ENCODE measurements at regions of chr4 and their contacts with region 1.

Region 1: DNA sequence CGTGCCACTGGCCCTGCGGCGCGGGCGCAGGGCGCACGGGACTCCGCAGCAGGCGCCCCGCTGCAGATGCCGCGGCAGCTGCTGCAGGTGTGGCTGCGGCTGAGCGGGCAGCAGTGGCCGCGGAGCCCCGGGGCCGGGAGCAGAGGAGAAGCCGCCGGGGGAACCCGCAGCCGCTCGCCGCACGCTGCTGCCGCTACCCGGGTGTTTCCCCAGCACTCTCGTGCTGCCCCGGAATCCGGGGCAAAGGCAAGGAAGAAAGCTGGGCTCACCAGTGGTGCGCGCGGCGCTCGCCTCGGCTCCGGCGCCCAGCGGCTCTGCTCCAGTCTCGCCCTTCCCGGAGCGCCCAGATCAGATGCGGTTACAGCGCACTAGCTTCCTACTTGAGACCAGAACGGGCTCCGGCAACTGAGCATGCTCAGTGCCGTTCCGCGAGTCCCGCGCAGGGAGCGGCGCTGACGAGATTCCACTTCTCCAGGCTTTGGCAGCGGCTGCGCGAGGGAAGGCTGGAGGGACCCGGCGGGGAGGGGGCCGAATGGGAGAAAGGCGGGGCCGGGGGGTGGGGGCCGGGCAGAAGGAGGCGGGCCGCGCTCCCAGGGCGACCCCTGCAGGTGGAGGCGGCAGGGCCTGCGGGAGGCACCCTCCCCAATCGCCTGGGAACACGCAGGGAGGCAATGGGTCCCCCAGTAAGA is at the start of gene APBB2:
- DNase-seq: peak; percentile 96
- H3K4me3 ChIP-seq: peak within 1 kb of the TSS; percentile 91
- H3K4me3 Mint-ChIP-seq: peak within 1 kb of the TSS; percentile 99
- H3K27ac Mint-ChIP-seq: peak within 1 kb of the TSS; percentile 93
- H3K4me1 ChIP-seq: peaks cover 27% of the 10 kb centered on the region
- H3K4me1 Mint-ChIP-seq: peaks cover 9% of the 10 kb centered on the region
- H3K27me3 ChIP-seq: no peaks in the 10 kb centered on the region
- H3K27me3 Mint-ChIP-seq: no peaks in the 10 kb centered on the region
- CTCF ChIP-seq: peak; percentile 82 to 94
- total RNA-seq, gene APBB2: 80.7 and 88.6 TPM in 2 replicates

Region 2: GRCh38 chr4:40749717-40750460 is 464.4 kb before region 1 on chr4 and contains the start of gene NSUN7:
- CTCF ChIA-PET with region 1: no interaction called
- POLR2A ChIA-PET with region 1: no interaction called
- intact Hi-C with region 1: loop called (anchors 10 kb)
- DNase-seq: peak; percentile 94 to 96
- H3K4me3 ChIP-seq: peak within 1 kb of the TSS; percentile 94
- H3K4me3 Mint-ChIP-seq: peak within 1 kb of the TSS; percentile 94
- H3K27ac Mint-ChIP-seq: peak within 1 kb of the TSS; percentile 93
- H3K4me1 ChIP-seq: peaks cover 6% of the 10 kb centered on the region; the same call in 1 of the 2 replicates
- H3K4me1 Mint-ChIP-seq: no peaks in the 10 kb centered on the region
- H3K27me3 ChIP-seq: no peaks in the 10 kb centered on the region
- H3K27me3 Mint-ChIP-seq: no peaks in the 10 kb centered on the region
- CTCF ChIP-seq: no peak
- total RNA-seq, gene NSUN7: 18.5 and 19.6 TPM in 2 replicates

Region 3: DNA sequence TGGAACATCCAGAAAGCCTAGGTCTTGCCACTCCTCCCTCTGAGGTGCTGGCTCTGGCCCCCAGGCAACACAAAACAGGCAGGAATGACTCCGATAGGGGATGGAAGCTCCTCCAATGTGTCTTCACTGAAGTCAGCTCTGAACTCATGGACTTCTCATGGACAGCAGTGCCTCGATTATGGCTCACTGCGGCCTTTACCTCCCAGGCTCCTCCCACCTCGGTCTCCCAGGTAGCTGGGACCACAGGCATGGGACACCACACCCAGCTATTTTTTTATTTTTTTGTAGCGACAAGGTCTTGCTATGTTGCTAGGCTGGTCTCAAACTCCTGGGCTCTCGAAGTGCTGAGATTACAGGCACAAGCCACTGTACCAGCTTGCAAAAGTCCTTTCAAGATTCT is 283.1 kb before region 1 on chr4:
- CTCF ChIA-PET with region 1: interaction called, 11 read pairs
- POLR2A ChIA-PET with region 1: interaction called, 5 read pairs
- intact Hi-C with region 1: loop called (anchors 1 kb)
- DNase-seq: peak in 1 of 2 experiments; percentile 56
- H3K4me3 ChIP-seq: no peak overlapping the region
- H3K4me3 Mint-ChIP-seq: no peak overlapping the region
- H3K27ac Mint-ChIP-seq: peak overlapping the region; percentile 7
- H3K4me1 ChIP-seq: peaks cover 8% of the 10 kb centered on the region
- H3K4me1 Mint-ChIP-seq: peaks cover 12% of the 10 kb centered on the region
- H3K27me3 ChIP-seq: no peaks in the 10 kb centered on the region
- H3K27me3 Mint-ChIP-seq: no peaks in the 10 kb centered on the region
- CTCF ChIP-seq: no peak

Region 4: GRCh38 chr4:41009411-41009810 is 204.9 kb before region 1 on chr4:
- CTCF ChIA-PET with region 1: no interaction called
- POLR2A ChIA-PET with region 1: no interaction called
- intact Hi-C with region 1: no loop called
- DNase-seq: no peak
- H3K4me3 ChIP-seq: no peak overlapping the region
- H3K4me3 Mint-ChIP-seq: no peak overlapping the region
- H3K27ac Mint-ChIP-seq: no peak overlapping the region
- H3K4me1 ChIP-seq: no peaks in the 10 kb centered on the region
- H3K4me1 Mint-ChIP-seq: peaks cover 7% of the 10 kb centered on the region
- H3K27me3 ChIP-seq: no peaks in the 10 kb centered on the region
- H3K27me3 Mint-ChIP-seq: no peaks in the 10 kb centered on the region
- CTCF ChIP-seq: no peak

Region 5: GRCh38 chr4:41079871-41080560 is 134.3 kb before region 1 on chr4:
- CTCF ChIA-PET with region 1: interaction called, 3 read pairs
- POLR2A ChIA-PET with region 1: no interaction called
- intact Hi-C with region 1: loop called (anchors 5 kb)
- DNase-seq: no peak
- H3K4me3 ChIP-seq: no peak overlapping the region
- H3K4me3 Mint-ChIP-seq: no peak overlapping the region
- H3K27ac Mint-ChIP-seq: no peak overlapping the region
- H3K4me1 ChIP-seq: peaks cover 40% of the 10 kb centered on the region
- H3K4me1 Mint-ChIP-seq: peaks cover 38% of the 10 kb centered on the region
- H3K27me3 ChIP-seq: no peaks in the 10 kb centered on the region
- H3K27me3 Mint-ChIP-seq: no peaks in the 10 kb centered on the region
- CTCF ChIP-seq: no peak

Region 6: GRCh38 chr4:41133454-41134018 is 80.7 kb before region 1 on chr4:
- CTCF ChIA-PET with region 1: interaction called, 16 read pairs
- POLR2A ChIA-PET with region 1: no interaction called
- intact Hi-C with region 1: loop called (anchors 1 kb)
- DNase-seq: peak; percentile 77 to 89
- H3K4me3 ChIP-seq: no peak overlapping the region
- H3K4me3 Mint-ChIP-seq: peak overlapping the region; percentile 23
- H3K27ac Mint-ChIP-seq: peak overlapping the region; percentile 71
- H3K4me1 ChIP-seq: peaks cover 86% of the 10 kb centered on the region
- H3K4me1 Mint-ChIP-seq: peaks cover 48% of the 10 kb centered on the region
- H3K27me3 ChIP-seq: no peaks in the 10 kb centered on the region
- H3K27me3 Mint-ChIP-seq: no peaks in the 10 kb centered on the region
- CTCF ChIP-seq: no peak

Region 7: DNA sequence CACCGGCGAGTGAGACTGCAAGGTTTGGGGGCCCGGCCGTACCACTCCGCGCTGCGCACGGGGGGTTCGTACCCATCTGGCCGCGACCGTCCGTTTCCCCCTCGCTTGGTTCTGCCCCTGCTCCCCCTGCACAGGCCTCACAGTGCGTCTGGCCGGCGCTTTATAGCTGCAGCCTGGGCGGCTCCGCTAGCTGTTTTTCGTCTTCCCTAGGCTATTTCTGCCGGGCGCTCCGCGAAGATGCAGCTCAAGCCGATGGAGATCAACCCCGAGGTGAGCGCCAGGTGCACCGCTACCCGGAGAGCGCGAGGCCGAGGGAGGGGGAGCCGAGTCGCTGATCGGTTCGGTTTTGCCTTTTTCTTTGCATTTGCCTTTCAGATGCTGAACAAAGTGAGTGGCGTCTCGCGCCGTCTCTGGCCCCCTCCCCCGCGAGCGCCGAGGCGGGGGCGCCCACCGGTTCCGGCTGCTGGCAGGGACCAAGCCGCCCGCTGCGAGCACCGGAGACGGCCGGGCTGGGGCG is 42.5 kb after region 1 on chr4 and contains the start of gene UCHL1:
- CTCF ChIA-PET with region 1: interaction called, 5 read pairs
- POLR2A ChIA-PET with region 1: interaction called, 9 read pairs
- intact Hi-C with region 1: loop called (anchors 1 kb)
- DNase-seq: peak; percentile 86 to 90
- H3K4me3 ChIP-seq: peak within 1 kb of the TSS; percentile 63
- H3K4me3 Mint-ChIP-seq: peak within 1 kb of the TSS; percentile 69
- H3K27ac Mint-ChIP-seq: peak within 1 kb of the TSS; percentile 82
- H3K4me1 ChIP-seq: peaks cover 13% of the 10 kb centered on the region
- H3K4me1 Mint-ChIP-seq: peaks cover 17% of the 10 kb centered on the region
- H3K27me3 ChIP-seq: no peaks in the 10 kb centered on the region
- H3K27me3 Mint-ChIP-seq: peaks cover 11% of the 10 kb centered on the region
- CTCF ChIP-seq: no peak
- total RNA-seq, gene UCHL1: 198 and 233 TPM in 2 replicates

Region 8: GRCh38 chr4:41304221-41304620 is 89.9 kb after region 1 on chr4:
- CTCF ChIA-PET with region 1: no interaction called
- POLR2A ChIA-PET with region 1: no interaction called
- intact Hi-C with region 1: no loop called
- DNase-seq: no peak
- H3K4me3 ChIP-seq: no peak overlapping the region
- H3K4me3 Mint-ChIP-seq: no peak overlapping the region
- H3K27ac Mint-ChIP-seq: no peak overlapping the region
- H3K4me1 ChIP-seq: no peaks in the 10 kb centered on the region
- H3K4me1 Mint-ChIP-seq: no peaks in the 10 kb centered on the region
- H3K27me3 ChIP-seq: no peaks in the 10 kb centered on the region
- H3K27me3 Mint-ChIP-seq: no peaks in the 10 kb centered on the region
- CTCF ChIP-seq: no peak

Region 9: GRCh38 chr4:41369697-41370096 is 155.4 kb after region 1 on chr4:
- CTCF ChIA-PET with region 1: no interaction called
- POLR2A ChIA-PET with region 1: no interaction called
- intact Hi-C with region 1: no loop called
- DNase-seq: no peak
- H3K4me3 ChIP-seq: no peak overlapping the region
- H3K4me3 Mint-ChIP-seq: no peak overlapping the region
- H3K27ac Mint-ChIP-seq: no peak overlapping the region
- H3K4me1 ChIP-seq: no peaks in the 10 kb centered on the region
- H3K4me1 Mint-ChIP-seq: no peaks in the 10 kb centered on the region
- H3K27me3 ChIP-seq: no peaks in the 10 kb centered on the region
- H3K27me3 Mint-ChIP-seq: peaks cover 3% of the 10 kb centered on the region
- CTCF ChIP-seq: no peak

Region 10: GRCh38 chr4:41644288-41644914 is 430.1 kb after region 1 on chr4:
- CTCF ChIA-PET with region 1: no interaction called
- POLR2A ChIA-PET with region 1: no interaction called
- intact Hi-C with region 1: no loop called
- DNase-seq: peak; percentile 52 to 68
- H3K4me3 ChIP-seq: no peak overlapping the region
- H3K4me3 Mint-ChIP-seq: peak overlapping the region; percentile 21
- H3K27ac Mint-ChIP-seq: no peak overlapping the region
- H3K4me1 ChIP-seq: peaks cover 9% of the 10 kb centered on the region; the same call in 1 of the 2 replicates
- H3K4me1 Mint-ChIP-seq: no peaks in the 10 kb centered on the region
- H3K27me3 ChIP-seq: no peaks in the 10 kb centered on the region
- H3K27me3 Mint-ChIP-seq: no peaks in the 10 kb centered on the region
- CTCF ChIP-seq: peak; percentile 65 to 67

Measured in Caco-2 (cell line).